H1 (cell line): ENCODE measurements at regions of chr20 and their contacts with region 1.

Region 1: GRCh38 chr20:50523552-50524167 is 13.5 kb downstream of the PTPN1 start:
- DNase-seq: no peak
- H3K4me3 ChIP-seq: no peak overlapping the region
- H3K27ac ChIP-seq: no peak overlapping the region
- H3K4me1 ChIP-seq: peaks cover 0 to 6% (median 4%) of the 10 kb centered on the region in 4 experiments; a peak in 3 of 7 replicates
- H3K27me3 ChIP-seq: no peaks in the 10 kb centered on the region
- CTCF ChIP-seq: no peak
- EP300 ChIP-seq: no peak
- POLR2A ChIP-seq: no peak
- RAD21 ChIP-seq: no peak

Region 2: DNA sequence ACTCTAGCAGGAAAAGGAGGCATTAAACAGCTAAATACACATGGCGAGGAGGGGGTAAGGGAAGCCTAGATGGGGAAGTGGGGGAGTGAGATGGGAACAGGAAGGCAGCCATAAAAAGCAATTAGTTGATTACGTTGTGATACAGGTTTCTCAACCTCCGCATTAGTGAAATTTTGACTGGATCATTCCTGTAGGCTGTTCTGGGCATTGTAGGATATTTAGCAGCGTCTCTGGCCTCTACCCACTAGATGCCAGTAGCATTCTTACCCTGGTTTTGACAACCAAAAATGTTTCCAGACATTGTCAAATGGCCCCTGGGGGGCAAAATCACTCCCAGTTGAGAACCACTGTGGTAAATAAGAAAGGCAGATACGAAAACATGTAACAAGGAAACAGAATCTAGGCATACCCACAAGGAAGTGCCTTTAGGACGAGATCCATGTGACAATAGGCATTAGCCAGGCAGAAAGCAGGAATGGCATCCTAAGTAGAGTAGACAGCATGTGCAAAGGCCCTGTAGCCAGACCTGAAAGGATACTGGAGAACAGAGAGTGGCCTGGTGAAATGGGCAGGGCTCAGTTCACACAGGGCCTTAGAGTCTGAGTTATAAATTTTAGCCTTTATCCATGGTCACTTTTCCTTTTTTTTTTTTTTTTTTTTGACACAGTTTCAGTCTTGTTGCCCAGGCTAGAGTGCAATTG is 39.2 kb before region 1 on chr20:
- CTCF ChIA-PET with region 1: no interaction called
- POLR2A ChIA-PET with region 1: no interaction called
- DNase-seq: no peak
- H3K4me3 ChIP-seq: no peak overlapping the region
- H3K27ac ChIP-seq: no peak overlapping the region
- H3K4me1 ChIP-seq: no peaks in the 10 kb centered on the region
- H3K27me3 ChIP-seq: no peaks in the 10 kb centered on the region
- CTCF ChIP-seq: no peak
- EP300 ChIP-seq: no peak
- POLR2A ChIP-seq: no peak
- RAD21 ChIP-seq: no peak

Region 3: GRCh38 chr20:50509935-50510705 is 13.5 kb before region 1 on chr20 and contains the start of gene PTPN1:
- CTCF ChIA-PET with region 1: interaction called, 6 read pairs
- POLR2A ChIA-PET with region 1: interaction called, 13 read pairs
- DNase-seq: peak; percentile 95 to 97
- H3K4me3 ChIP-seq: peak within 1 kb of the TSS; percentile 81 to 96 (median 89)
- H3K27ac ChIP-seq: peak within 1 kb of the TSS; percentile 62
- H3K4me1 ChIP-seq: peaks cover 3 to 7% (median 5%) of the 10 kb centered on the region in 4 experiments
- H3K27me3 ChIP-seq: no peaks in the 10 kb centered on the region
- CTCF ChIP-seq: no peak
- EP300 ChIP-seq: no peak
- POLR2A ChIP-seq: peak; percentile 23 to 94
- RAD21 ChIP-seq: no peak
- total RNA-seq, gene PTPN1: 30.8 and 32.1 TPM in 2 replicates